H1 (cell line): ENCODE measurements at regions of chr12 and their contacts with region 1.

Region 1: DNA sequence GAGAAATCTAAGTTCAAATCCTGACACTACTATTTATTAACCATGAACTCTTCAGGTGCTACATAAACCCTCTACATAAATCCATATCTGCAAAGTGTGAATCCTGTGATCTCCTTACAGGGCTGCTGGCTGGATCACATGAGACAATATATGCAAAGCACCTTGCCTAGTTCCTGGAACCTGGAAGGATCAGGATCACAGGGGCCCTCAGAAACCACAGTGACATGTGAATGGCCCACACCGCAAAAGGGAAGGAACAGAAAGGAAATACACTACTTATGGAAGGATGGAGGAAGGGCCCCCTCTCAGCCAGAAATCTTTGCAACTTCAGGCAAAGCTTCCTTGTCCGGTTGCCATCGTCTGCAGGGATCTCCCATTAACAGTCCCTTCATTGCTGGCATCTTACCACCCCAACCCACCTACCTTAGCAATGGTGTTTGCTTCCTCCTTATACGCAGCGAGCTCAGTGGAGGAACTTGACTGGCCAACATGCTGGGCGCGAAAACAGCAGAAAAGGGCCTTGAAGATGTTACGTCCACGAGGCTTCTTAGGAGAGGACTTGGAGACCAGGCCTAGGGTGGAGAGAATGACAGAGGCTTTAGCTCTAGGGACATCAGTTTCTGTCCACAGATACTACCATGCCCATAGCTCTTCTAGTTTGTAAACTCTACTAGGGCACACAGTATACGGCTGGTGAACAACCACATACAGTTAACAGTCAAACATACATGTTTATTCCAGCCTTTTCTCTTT is 10.7 kb upstream of the AVIL start:
- DNase-seq: no peak
- H3K4me3 ChIP-seq: no peak overlapping the region
- H3K27ac ChIP-seq: no peak overlapping the region; the same call in 1 of the 2 replicates
- H3K4me1 ChIP-seq: peaks cover 7 to 20% (median 9%) of the 10 kb centered on the region in 4 experiments
- H3K27me3 ChIP-seq: no peaks in the 10 kb centered on the region
- CTCF ChIP-seq: no peak
- EP300 ChIP-seq: no peak
- POLR2A ChIP-seq: no peak
- RAD21 ChIP-seq: no peak

Region 2: GRCh38 chr12:57815177-57816000 is 13.8 kb before region 1 on chr12:
- CTCF ChIA-PET with region 1: interaction called, 16 read pairs
- POLR2A ChIA-PET with region 1: interaction called, 18 read pairs
- DNase-seq: peak; percentile 50 to 62
- H3K4me3 ChIP-seq: no peak overlapping the region
- H3K27ac ChIP-seq: no peak overlapping the region
- H3K4me1 ChIP-seq: no peaks in the 10 kb centered on the region
- H3K27me3 ChIP-seq: no peaks in the 10 kb centered on the region
- CTCF ChIP-seq: peak; percentile 63 to 70 (median 67)
- EP300 ChIP-seq: no peak
- POLR2A ChIP-seq: no peak
- RAD21 ChIP-seq: peak; percentile 57 to 70